HCT116 (cell line): ENCODE measurements at regions of chr1 and their contacts with region 1.

Region 1: DNA sequence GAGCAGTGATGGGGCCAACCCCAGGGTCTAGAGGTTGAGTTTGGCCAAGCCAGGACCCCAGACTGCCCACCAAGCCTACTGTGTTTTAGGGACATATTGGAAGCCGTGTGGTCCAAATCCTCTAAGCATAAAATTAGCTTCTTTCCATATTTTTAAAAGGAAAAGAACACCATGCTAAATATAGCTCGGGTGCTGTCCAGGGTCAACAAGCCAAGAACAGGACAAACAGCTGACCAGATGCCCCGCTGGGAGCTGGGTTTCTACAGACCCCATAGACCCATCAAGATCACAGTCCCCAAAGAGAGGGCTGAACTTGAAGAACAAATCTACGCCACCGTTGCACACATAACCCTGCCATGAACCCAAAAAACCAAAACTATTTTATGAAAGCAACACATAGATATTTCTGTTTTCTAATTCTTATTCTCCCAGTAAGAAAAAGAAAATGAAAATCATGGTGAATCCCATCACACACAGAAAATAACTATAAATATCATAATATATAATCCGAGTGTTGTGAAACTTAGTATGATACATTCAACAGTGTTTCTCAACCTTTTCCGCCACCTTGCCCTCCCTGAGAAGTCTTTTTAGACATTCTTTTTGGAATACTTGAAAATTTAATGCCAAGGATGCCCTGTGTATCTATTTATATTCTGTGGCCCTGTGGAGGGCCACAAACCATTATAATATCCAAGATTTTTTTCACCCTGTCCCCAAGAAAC is 36.2 kb upstream of the FHAD1 start:
- DNase-seq: no peak
- ATAC-seq: no peak
- H3K4me3 ChIP-seq: no peak overlapping the region
- H3K27ac ChIP-seq: no peak overlapping the region
- H3K4me1 ChIP-seq: peaks cover 5 to 12% of the 10 kb centered on the region in 2 experiments
- H3K27me3 ChIP-seq: no peaks in the 10 kb centered on the region
- CTCF ChIP-seq: no peak
- POLR2A ChIP-seq: no peak
- RAD21 ChIP-seq: no peak

Region 2: GRCh38 chr1:15231714-15232201 is 20.9 kb after region 1 on chr1:
- CTCF ChIA-PET with region 1: no interaction called
- POLR2A ChIA-PET with region 1: no interaction called
- RAD21 ChIA-PET with region 1: no interaction called
- intact Hi-C with region 1: no loop called
- DNase-seq: no peak
- ATAC-seq: no peak
- H3K4me3 ChIP-seq: no peak overlapping the region
- H3K27ac ChIP-seq: no peak overlapping the region
- H3K4me1 ChIP-seq: peaks cover 0 to 23% of the 10 kb centered on the region in 2 experiments; a peak in 2 of 4 replicates
- H3K27me3 ChIP-seq: no peaks in the 10 kb centered on the region
- CTCF ChIP-seq: no peak
- POLR2A ChIP-seq: no peak
- RAD21 ChIP-seq: no peak

Region 3: DNA sequence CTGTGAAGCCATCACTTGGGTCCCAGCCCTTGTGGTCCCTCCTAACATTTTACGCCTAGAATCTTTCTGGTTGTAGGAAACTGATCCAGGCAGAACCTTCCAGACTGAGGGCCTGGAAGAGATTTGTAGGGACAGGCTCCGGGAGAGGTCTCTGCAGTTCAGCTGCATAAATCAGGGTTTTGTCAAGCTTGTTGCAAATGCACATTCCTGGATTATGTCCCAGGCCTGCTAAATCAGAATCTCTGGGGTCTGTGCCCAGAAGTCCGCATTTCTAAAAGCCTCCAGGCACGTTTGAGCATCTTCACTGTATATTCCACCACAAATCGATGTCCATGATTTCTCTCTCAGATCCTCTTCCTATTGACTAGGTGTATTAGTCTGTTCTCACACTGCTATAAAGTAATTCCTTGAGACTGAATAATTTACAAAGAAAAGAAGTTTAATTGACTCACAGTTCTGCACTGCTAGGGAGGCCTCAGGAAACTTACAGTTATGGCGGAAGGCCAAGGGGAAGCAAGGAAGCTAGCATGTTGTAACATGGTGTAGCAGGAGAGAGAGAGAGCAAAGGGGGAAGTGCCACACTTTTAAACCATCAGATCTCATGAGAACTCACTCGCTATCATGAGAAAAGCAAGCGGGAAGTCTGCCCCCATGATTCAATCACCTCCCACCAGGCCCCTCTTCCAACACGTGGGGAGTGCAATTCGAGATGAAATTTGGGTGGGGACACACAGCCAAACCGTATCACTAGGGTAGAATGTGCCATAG is 35.0 kb after region 1 on chr1:
- CTCF ChIA-PET with region 1: no interaction called
- POLR2A ChIA-PET with region 1: no interaction called
- RAD21 ChIA-PET with region 1: no interaction called
- intact Hi-C with region 1: loop called (anchors 1 kb)
- DNase-seq: no peak
- ATAC-seq: no peak
- H3K4me3 ChIP-seq: no peak overlapping the region
- H3K27ac ChIP-seq: no peak overlapping the region
- H3K4me1 ChIP-seq: peaks cover 0 to 17% of the 10 kb centered on the region in 2 experiments; a peak in 2 of 4 replicates
- H3K27me3 ChIP-seq: no peaks in the 10 kb centered on the region
- CTCF ChIP-seq: no peak
- POLR2A ChIP-seq: no peak
- RAD21 ChIP-seq: no peak